ENCODE measurements at regions of chr20 and their contacts with region 1.

Region 1: DNA sequence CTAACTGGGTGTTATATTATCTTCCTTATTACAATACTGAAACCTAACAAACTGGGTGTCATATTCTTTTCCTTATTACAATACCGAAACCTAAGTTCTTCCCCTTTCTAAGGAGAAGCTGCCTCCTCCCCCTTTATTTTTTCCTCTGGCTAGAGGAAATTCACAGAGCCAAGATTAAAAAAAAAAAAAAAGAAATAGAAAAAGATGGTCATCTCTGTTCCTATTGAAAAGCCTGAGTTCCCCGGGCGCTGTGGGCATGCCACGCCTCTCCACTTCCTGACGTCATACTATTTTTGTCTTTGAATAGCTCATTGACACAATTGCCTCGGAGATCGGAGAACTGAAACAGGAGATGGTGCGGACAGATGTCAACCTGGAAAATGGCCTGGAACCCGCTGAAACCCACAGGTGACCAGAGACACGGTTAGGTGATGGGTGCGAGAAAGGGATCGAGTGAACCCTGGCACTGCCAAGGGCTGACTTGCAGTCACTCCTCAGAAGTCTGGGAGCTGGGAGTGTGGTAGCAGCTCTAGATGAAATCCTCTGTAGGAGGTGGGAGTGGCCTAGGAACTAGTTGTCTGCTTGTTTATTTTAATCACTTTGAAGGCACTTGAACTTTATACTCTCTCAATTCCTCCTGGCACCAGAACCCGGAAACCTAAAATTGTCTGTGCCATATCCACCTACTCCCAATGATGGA is 82.2 kb upstream of the NAA20 start:
- DNase-seq: peak; percentile 70
- H3K4me3 Mint-ChIP-seq: peak overlapping the region; percentile 69
- H3K27ac Mint-ChIP-seq: peak overlapping the region; percentile 71
- H3K4me1 Mint-ChIP-seq: peaks cover 15% of the 10 kb centered on the region
- H3K27me3 Mint-ChIP-seq: no peaks in the 10 kb centered on the region
- CTCF ChIP-seq: no peak

Region 2: GRCh38 chr20:19947611-19948264 is 12.8 kb after region 1 on chr20:
- CTCF ChIA-PET with region 1: interaction called, 5 read pairs
- POLR2A ChIA-PET with region 1: interaction called, 10 read pairs
- intact Hi-C with region 1: no loop called
- DNase-seq: peak; percentile 49
- H3K4me3 Mint-ChIP-seq: no peak overlapping the region
- H3K27ac Mint-ChIP-seq: no peak overlapping the region
- H3K4me1 Mint-ChIP-seq: no peaks in the 10 kb centered on the region
- H3K27me3 Mint-ChIP-seq: no peaks in the 10 kb centered on the region
- CTCF ChIP-seq: no peak

Region 3: GRCh38 chr20:19958219-19958618 is 23.3 kb after region 1 on chr20:
- CTCF ChIA-PET with region 1: interaction called, 3 read pairs
- POLR2A ChIA-PET with region 1: interaction called, 38 read pairs
- intact Hi-C with region 1: no loop called
- DNase-seq: peak; percentile 67
- H3K4me3 Mint-ChIP-seq: no peak overlapping the region
- H3K27ac Mint-ChIP-seq: peak overlapping the region; percentile 61
- H3K4me1 Mint-ChIP-seq: peaks cover 6% of the 10 kb centered on the region
- H3K27me3 Mint-ChIP-seq: no peaks in the 10 kb centered on the region
- CTCF ChIP-seq: no peak

Region 4: GRCh38 chr20:19964289-19965263 is 29.6 kb after region 1 on chr20:
- CTCF ChIA-PET with region 1: interaction called, 3 read pairs
- POLR2A ChIA-PET with region 1: interaction called, 38 read pairs
- intact Hi-C with region 1: no loop called
- DNase-seq: peak; percentile 80
- H3K4me3 Mint-ChIP-seq: no peak overlapping the region
- H3K27ac Mint-ChIP-seq: peak overlapping the region; percentile 87
- H3K4me1 Mint-ChIP-seq: peaks cover 15% of the 10 kb centered on the region
- H3K27me3 Mint-ChIP-seq: no peaks in the 10 kb centered on the region
- CTCF ChIP-seq: no peak

Measured in MCF 10A (cell line).